ENCODE measurements at regions of chr1 and their contacts with region 1.

Region 1: DNA sequence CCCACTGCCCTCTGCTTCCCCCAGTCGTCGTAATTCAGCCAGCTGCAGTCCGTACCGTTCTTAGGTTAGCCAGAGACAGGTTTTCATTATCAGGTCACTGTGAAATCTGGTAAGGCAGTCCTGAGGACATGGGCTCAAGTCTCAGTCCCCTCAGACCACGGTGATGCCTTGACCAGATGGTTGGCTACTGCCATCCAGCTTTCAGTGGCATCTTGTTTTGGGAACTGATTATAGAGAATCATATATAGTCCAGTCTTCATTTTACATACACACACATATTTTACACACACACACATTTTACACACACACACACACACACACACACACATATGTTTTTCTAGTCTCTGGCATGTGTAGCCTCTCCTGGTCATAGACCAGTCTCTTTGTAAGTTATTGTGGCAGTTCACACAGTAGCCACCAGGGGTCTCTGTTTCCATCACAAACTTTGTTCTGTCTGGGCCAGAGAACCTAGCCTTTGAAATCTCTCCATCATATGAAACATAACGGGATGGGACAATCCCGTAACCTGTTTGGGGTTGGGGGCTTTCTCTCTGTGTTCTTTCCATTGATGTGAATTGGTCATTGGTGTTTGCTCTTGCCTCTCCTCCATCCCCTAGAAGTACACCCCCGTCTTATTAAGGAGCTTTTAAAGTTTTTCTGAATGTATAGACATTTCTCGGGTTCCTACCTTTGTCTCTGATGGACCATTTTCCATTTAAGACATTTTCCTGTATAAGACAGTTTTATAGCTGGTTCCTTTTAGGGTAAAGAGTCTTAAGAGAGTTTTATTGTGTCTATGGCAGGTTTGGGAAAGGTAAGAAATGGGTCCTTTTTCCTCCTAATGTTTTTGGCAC is 8.4 kb upstream of the IKBKE start:
- DNase-seq: peak; percentile 87
- H3K4me3 Mint-ChIP-seq: no peak overlapping the region
- H3K27ac Mint-ChIP-seq: no peak overlapping the region
- H3K4me1 Mint-ChIP-seq: peaks cover 41% of the 10 kb centered on the region
- H3K27me3 Mint-ChIP-seq: no peaks in the 10 kb centered on the region

Region 2: GRCh38 chr1:206449622-206450021 is 12.2 kb before region 1 on chr1:
- CTCF ChIA-PET with region 1: interaction called, 17 read pairs
- DNase-seq: no peak
- H3K4me3 Mint-ChIP-seq: no peak overlapping the region
- H3K27ac Mint-ChIP-seq: no peak overlapping the region
- H3K4me1 Mint-ChIP-seq: no peaks in the 10 kb centered on the region
- H3K27me3 Mint-ChIP-seq: no peaks in the 10 kb centered on the region

Region 3: GRCh38 chr1:206479183-206480125 is 17.6 kb after region 1 on chr1:
- CTCF ChIA-PET with region 1: interaction called, 52 read pairs
- DNase-seq: peak; percentile 79
- H3K4me3 Mint-ChIP-seq: no peak overlapping the region
- H3K27ac Mint-ChIP-seq: peak overlapping the region; percentile 58
- H3K4me1 Mint-ChIP-seq: peaks cover 16% of the 10 kb centered on the region
- H3K27me3 Mint-ChIP-seq: no peaks in the 10 kb centered on the region